ENCODE measurements at regions of chr20 and their contacts with region 1.

Region 1: DNA sequence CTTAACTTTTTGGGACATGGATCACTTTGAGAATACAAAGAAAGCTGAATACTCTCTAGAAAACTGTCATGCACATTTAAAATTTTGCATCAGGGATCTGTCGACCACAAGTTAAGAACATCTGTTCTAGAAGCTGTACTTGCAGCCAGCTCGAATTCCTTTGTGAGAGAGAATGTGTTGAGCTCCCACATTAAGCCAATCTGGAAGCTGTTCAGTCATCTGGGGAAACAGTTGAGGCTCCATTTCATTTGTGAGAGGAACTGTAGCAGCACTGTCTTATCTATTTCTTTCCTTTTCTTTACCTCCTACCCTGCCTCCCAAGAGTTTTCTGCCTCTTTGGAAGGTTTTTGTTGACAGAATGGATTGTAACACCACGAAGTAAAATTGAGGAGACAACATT is 50.8 kb downstream of the KAT14 start:
- DNase-seq: no peak
- ATAC-seq: no peak
- H3K4me3 Mint-ChIP-seq: no peak overlapping the region
- H3K27ac Mint-ChIP-seq: no peak overlapping the region
- H3K4me1 Mint-ChIP-seq: no peaks in the 10 kb centered on the region
- H3K27me3 Mint-ChIP-seq: no peaks in the 10 kb centered on the region
- CTCF ChIP-seq: no peak

Region 2: GRCh38 chr20:18176318-18176785 is 12.1 kb before region 1 on chr20:
- CTCF ChIA-PET with region 1: interaction called, 17 read pairs
- POLR2A ChIA-PET with region 1: no interaction called
- DNase-seq: peak; percentile 44
- ATAC-seq: peak; percentile 90
- H3K4me3 Mint-ChIP-seq: no peak overlapping the region
- H3K27ac Mint-ChIP-seq: peak overlapping the region; percentile 66
- H3K4me1 Mint-ChIP-seq: peaks cover 5% of the 10 kb centered on the region; the same call in 1 of the 2 replicates
- H3K27me3 Mint-ChIP-seq: no peaks in the 10 kb centered on the region
- CTCF ChIP-seq: no peak

Region 3: DNA sequence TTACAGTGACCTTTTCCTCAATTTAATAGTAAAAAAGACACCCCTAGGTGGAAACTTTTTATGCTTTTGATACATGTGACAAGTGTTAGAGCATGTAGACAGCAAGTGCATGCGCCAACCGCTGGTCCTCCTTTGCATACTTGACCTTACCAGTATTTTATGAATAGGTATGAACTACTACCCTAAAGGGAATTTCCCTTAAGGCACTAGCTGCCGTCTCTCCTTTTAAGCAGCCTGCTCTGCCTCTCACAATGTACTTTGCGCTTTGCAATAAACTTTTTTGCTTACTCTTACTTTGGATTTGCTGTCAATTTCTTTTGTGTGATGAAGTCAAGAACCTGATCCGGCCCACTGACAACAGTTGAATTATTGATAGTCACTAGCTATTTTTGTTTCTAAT is 49.2 kb after region 1 on chr20:
- CTCF ChIA-PET with region 1: no interaction called
- POLR2A ChIA-PET with region 1: no interaction called
- DNase-seq: no peak
- ATAC-seq: no peak
- H3K4me3 Mint-ChIP-seq: no peak overlapping the region
- H3K27ac Mint-ChIP-seq: no peak overlapping the region
- H3K4me1 Mint-ChIP-seq: no peaks in the 10 kb centered on the region
- H3K27me3 Mint-ChIP-seq: peaks cover 3% of the 10 kb centered on the region
- CTCF ChIP-seq: no peak

Region 4: DNA sequence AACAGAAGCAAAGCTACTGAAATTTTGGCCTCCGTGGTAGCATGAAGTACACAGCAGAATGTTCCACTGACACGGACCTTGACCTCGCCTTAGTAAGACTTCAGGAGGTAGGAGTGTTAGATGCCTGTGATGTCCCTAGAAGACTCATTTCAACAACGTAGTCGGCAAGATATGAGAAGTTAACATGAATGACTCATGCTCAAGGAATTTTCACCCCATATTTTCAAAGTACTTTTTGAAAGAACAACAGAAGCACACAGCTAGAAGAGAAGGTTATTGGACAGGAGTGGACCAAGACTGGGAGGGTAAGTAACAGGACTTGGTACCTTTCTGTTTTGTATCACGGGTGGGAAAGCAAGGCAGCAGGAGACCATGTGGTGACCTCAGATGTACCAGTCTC is 200.4 kb after region 1 on chr20:
- CTCF ChIA-PET with region 1: no interaction called
- POLR2A ChIA-PET with region 1: no interaction called
- DNase-seq: no peak
- ATAC-seq: no peak
- H3K4me3 Mint-ChIP-seq: no peak overlapping the region
- H3K27ac Mint-ChIP-seq: no peak overlapping the region; the same call in 1 of the 2 replicates
- H3K4me1 Mint-ChIP-seq: no peaks in the 10 kb centered on the region
- H3K27me3 Mint-ChIP-seq: no peaks in the 10 kb centered on the region
- CTCF ChIP-seq: no peak